Tibial artery (tissue), 4 donors: ENCODE measurements at regions of chr14 and their contacts with region 1.

Region 1: DNA sequence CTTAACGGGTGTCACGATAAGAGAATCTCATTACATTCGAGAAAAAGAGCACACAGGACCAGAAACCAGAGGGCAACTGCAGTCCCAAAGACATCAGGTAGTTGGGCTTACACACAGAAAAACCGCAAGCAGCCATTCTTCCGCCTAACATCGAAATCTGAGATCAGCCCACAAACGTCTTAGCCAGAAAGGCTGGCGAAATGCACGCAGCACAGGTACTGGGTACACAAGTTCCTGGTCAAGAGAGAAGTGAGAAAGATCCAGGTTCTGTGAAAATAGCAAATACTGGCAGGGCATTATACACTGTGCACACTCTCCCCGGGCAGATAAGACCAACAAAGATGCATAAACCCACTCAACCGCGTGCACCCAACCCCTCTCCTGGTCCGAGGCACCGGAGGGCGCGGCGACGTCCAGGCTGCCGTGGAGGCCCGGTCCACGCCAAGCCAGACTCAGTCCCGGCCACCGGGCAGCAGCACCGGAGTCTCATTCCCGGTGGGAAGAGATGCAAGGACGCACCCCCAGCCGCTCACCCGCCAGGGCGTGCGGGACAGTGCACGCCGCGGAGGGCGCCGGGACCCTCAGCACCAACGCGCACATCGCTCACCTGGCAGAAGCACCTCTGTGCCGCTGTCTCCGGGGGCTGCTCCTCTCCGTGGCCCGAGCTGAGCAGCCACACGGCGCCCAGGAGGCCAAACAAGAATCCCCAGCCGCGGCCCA is 437 bp downstream of the ERO1A start:
- DNase-seq: peak in 1 of 2 donors; percentile 74
- H3K4me3 ChIP-seq: peak overlapping the region; percentile 90
- H3K27ac ChIP-seq: peak overlapping the region; percentile 99
- H3K4me1 ChIP-seq: peaks cover 0 to 32% (median 11%) of the 10 kb centered on the region in 4 donors
- H3K27me3 ChIP-seq: no peaks in the 10 kb centered on the region
- CTCF ChIP-seq: no peak

Region 2: DNA sequence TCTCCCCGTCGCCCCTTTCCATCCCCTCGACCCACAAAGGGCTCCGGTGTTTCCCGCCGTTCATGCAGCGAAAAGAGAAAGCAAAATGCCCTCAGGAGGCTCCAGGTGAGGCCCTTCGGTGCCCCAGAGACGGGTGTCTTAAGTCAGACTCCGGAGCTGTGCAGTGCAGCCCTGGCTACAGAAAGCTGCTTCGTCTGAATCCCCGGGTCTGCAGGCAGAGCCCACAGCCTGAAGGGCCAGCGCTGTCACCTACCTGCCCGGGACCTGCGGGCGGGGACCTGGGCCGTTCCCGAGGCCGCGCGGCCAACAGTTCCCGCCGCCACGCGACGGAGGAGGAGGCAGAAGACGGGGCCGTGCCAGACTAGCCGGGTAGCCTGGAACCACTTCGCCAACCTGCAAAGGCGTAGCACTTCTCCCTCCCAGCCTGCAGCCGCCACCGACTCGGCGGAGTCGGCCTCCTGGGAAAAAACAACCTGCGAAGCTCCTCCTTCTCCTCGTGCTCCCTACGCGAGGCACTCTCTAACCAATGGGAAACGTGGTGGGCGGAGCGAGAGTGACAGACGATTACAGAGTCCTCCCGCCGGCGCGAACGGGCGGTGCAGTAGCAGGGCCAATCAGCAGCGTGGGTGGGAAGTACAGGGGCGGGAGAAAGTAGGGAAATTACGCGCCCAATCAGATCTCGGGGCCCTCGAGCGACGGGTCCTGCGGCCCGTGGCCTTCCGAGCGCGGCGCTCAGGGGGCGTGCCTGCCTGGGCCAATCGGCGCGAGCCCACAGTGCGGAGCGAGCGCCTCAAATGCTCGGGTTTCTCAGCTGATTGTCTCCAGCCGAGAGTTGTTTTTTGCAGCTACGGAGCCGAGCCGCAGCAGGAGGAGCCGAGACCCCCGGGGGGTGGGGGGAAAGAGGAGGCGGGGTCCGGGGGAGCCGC is 142.6 kb before region 1 on chr14 and contains the starts of genes GPR137C and TXNDC16:
- intact Hi-C with region 1: loop called (anchors 5 kb)
- DNase-seq: peak; percentile 100
- H3K4me3 ChIP-seq: peak within 1 kb of the TSS; percentile 85 to 96
- H3K27ac ChIP-seq: peak within 1 kb of the TSS; percentile 93
- H3K4me1 ChIP-seq: peaks cover 0 to 35% (median 17%) of the 10 kb centered on the region in 4 donors
- H3K27me3 ChIP-seq: peaks cover 0 to 2% of the 10 kb centered on the region in 2 donors
- CTCF ChIP-seq: no peak

Region 3: GRCh38 chr14:52873694-52874093 is 178.8 kb after region 1 on chr14:
- intact Hi-C with region 1: no loop called
- DNase-seq: peak in 1 of 2 donors; percentile 66
- H3K4me3 ChIP-seq: no peak overlapping the region
- H3K27ac ChIP-seq: peak overlapping the region in 1 of 2 donors; percentile 8
- H3K4me1 ChIP-seq: peaks cover 0 to 55% (median 16%) of the 10 kb centered on the region in 4 donors
- H3K27me3 ChIP-seq: no peaks in the 10 kb centered on the region
- CTCF ChIP-seq: no peak